Aorta (tissue), 5 donors: ENCODE measurements at regions of chr5 and their contacts with region 1.

Region 1: DNA sequence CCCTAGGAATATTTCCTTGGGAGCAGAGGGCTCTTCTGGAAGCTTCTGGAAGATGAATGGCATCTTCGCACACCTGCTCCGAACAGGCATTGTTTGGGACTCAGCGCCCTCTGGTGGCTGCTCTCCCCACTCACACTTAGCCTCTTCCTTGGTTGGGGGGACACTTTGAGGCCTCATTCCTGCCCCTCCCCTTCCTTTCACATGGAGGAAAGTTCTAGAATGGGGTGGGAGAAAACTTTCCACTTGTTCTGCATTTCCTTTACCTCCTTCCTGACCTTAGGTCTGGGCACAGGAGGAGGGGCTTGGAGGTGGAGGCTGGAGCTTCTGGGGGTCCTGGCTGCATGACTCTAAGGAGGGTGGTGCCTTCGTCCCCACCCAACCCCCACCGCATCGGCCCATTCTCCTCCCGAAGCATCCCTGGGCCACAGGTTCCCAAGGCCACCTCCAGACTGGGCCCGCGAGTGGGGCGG is 19.3 kb upstream of the SMIM32 start:
- DNase-seq: peak; percentile 63 to 86
- ATAC-seq: no peak
- H3K4me3 ChIP-seq: no peak overlapping the region
- H3K27ac ChIP-seq: no peak overlapping the region
- H3K4me1 ChIP-seq: no peaks in the 10 kb centered on the region
- H3K27me3 ChIP-seq: no peaks in the 10 kb centered on the region

Region 2: DNA sequence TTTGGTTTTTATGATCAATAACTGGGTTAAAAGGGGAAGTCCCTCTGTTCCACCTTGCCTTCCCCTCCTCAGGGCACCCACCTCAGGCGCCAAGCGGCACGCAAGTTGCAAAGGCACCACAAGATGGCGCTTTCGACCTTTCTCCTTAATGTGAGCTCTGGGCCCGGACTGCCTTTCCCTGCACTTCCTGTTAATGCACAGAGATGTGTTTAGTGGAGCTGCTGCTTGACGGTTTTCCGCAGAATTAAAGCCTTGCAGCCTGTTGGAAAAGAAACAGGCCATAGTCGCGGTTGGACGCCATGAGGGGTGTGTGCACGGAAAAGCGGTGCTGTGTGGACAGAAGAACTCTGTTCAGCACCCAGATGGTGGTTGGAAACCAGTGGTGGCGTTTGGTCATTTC is 651.4 kb before region 1 on chr5:
- intact Hi-C with region 1: loop called (anchors 10 kb)
- DNase-seq: peak; percentile 80 to 88
- ATAC-seq: peak; percentile 83
- H3K4me3 ChIP-seq: no peak overlapping the region
- H3K27ac ChIP-seq: no peak overlapping the region
- H3K4me1 ChIP-seq: no peaks in the 10 kb centered on the region
- H3K27me3 ChIP-seq: no peaks in the 10 kb centered on the region

Region 3: DNA sequence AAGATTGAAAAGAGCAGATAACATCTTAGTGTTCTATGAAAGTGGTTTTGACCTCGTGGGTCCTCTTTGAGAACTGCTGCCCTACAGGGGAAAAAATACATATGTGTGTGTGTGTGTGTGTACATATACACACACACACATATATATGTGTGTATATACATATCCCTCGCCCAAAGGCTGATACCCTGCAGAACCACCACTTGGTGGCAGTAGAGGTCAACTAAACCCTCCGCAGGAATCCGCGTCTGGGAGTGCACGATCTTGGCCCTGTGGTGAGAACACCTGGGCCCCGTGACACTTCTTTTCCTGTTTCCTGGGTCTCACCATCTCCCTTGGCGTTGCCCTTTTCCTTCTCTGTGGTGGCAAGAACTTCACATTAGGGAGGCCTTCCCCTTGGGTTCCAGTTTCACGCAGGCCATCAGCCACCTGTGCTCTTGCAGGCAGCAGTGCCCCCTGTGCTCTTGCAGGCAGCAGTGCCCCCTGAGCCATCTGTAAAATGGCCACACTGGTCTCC is 324.9 kb before region 1 on chr5:
- intact Hi-C with region 1: loop called (anchors 2 kb)
- DNase-seq: no peak
- ATAC-seq: peak; percentile 73
- H3K4me3 ChIP-seq: no peak overlapping the region
- H3K27ac ChIP-seq: no peak overlapping the region
- H3K4me1 ChIP-seq: no peaks in the 10 kb centered on the region
- H3K27me3 ChIP-seq: no peaks in the 10 kb centered on the region

Region 4: GRCh38 chr5:135944967-135945560 is 267.2 kb before region 1 on chr5:
- intact Hi-C with region 1: loop called (anchors 5 kb)
- DNase-seq: no peak
- ATAC-seq: peak; percentile 73
- H3K4me3 ChIP-seq: no peak overlapping the region
- H3K27ac ChIP-seq: no peak overlapping the region
- H3K4me1 ChIP-seq: no peaks in the 10 kb centered on the region
- H3K27me3 ChIP-seq: no peaks in the 10 kb centered on the region

Region 5: DNA sequence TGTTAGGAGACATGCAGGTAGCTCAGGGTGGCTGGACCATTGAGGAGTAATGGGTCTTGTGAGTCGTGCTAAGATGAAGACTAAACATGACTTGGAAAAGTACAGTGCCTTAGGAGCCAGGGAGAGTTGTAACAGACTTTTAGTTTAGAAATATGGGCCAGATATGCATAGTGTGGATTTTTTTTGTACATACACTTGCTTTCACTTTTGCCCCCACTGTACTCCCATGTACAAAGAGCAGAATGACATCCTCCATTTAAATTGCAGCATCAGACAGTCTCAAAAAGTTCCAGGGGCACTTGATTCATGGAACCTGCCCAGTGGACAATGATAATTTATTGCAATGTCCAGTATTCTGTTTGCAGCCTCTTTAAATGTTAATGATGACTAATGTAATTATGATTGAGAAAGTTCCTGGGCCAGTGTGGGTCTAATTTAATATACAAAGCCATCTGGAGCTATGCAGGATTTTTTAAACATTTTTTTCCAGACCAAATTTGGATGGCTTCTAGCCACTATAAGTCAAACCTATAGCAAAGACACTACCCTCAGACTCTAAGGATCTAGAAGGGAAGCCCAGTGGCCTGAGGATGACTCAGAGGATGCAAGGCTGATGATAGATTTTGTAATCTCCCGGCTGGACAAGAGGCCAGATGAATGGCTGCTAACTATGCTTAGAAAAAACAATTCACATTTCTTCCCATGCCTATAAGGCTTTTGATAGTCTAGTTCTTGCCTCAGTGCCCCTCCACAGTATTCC is 73.0 kb after region 1 on chr5:
- intact Hi-C with region 1: no loop called
- DNase-seq: no peak
- ATAC-seq: no peak
- H3K4me3 ChIP-seq: no peak overlapping the region
- H3K27ac ChIP-seq: no peak overlapping the region
- H3K4me1 ChIP-seq: peaks cover 0 to 2% of the 10 kb centered on the region in 2 donors
- H3K27me3 ChIP-seq: peaks cover 0 to 2% of the 10 kb centered on the region in 2 donors